Dorsolateral prefrontal cortex (tissue), 120 donors: ENCODE measurements at regions of chrX and their contacts with region 1.

Region 1: GRCh38 chrX:2640275-2641150 is 50.6 kb upstream of the CD99 start:
- DNase-seq: no peak
- H3K4me3 ChIP-seq: no peak overlapping the region
- H3K27ac ChIP-seq: no peak overlapping the region
- H3K27me3 ChIP-seq: peaks cover 0 to 67% (median 10%) of the 10 kb centered on the region in 45 donors
- CTCF ChIP-seq: no peak

Region 2: GRCh38 chrX:2819345-2820135 is 179.0 kb after region 1 on chrX:
- intact Hi-C with region 1: loop called in 1 of 2 experiments (anchors 10 kb)
- DNase-seq: no peak
- H3K4me3 ChIP-seq: no peak overlapping the region
- H3K27ac ChIP-seq: no peak overlapping the region
- H3K27me3 ChIP-seq: peaks cover 0 to 28% (median 2%) of the 10 kb centered on the region in 45 donors
- CTCF ChIP-seq: peak in 26 of 56 donors; percentile 11 to 52 (median 26)